ENCODE measurements at regions of chr15 and their contacts with region 1.

Region 1: GRCh38 chr15:28975766-28976179 is 90.0 kb downstream of the APBA2 start:
- DNase-seq: peak; percentile 32
- H3K4me3 ChIP-seq: no peak overlapping the region
- H3K27ac ChIP-seq: no peak overlapping the region
- H3K4me1 ChIP-seq: peaks cover 10% of the 10 kb centered on the region
- H3K27me3 ChIP-seq: peaks cover 0 to 1% of the 10 kb centered on the region in 2 experiments
- CTCF ChIP-seq: peak; percentile 75 to 87
- POLR2A ChIP-seq: no peak

Region 2: GRCh38 chr15:28786521-28786920 is 189.3 kb before region 1 on chr15:
- CTCF ChIA-PET with region 1: no interaction called
- POLR2A ChIA-PET with region 1: no interaction called
- dilution Hi-C with region 1: no loop called
- intact Hi-C with region 1: loop called (anchors 5 kb)
- DNase-seq: no peak
- H3K4me3 ChIP-seq: no peak overlapping the region
- H3K27ac ChIP-seq: no peak overlapping the region
- H3K4me1 ChIP-seq: no peaks in the 10 kb centered on the region
- H3K27me3 ChIP-seq: peaks cover 4 to 6% of the 10 kb centered on the region in 2 experiments
- CTCF ChIP-seq: no peak
- POLR2A ChIP-seq: no peak

Region 3: DNA sequence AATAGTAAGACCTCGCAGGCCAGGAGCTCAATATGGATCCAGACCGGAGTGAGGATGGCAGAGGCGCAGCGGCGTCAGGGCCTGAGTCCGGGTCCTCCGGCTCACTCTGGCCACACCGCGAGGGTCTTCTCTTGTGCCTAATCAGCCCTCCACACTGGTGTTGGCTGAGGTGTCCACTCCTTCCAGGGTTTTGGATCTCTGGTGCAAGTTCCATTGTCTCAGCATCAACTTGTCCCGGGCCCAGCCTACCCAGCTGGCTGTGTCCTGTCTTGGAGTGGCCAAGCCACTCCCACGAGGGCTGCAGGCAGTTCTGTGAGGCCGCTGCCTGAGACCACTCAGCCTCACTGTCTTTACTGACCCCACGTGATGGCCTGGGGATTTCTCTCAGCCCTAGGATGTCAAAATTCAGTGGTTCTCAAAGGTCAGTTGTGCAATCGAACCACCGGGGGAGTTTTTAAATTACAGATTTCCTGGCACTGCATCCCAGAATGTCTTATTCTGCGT is 114.7 kb before region 1 on chr15:
- CTCF ChIA-PET with region 1: no interaction called
- POLR2A ChIA-PET with region 1: no interaction called
- dilution Hi-C with region 1: no loop called
- intact Hi-C with region 1: no loop called
- DNase-seq: no peak
- H3K4me3 ChIP-seq: no peak overlapping the region
- H3K27ac ChIP-seq: no peak overlapping the region
- H3K4me1 ChIP-seq: no peaks in the 10 kb centered on the region
- H3K27me3 ChIP-seq: no peaks in the 10 kb centered on the region
- CTCF ChIP-seq: no peak
- POLR2A ChIP-seq: no peak

Region 4: DNA sequence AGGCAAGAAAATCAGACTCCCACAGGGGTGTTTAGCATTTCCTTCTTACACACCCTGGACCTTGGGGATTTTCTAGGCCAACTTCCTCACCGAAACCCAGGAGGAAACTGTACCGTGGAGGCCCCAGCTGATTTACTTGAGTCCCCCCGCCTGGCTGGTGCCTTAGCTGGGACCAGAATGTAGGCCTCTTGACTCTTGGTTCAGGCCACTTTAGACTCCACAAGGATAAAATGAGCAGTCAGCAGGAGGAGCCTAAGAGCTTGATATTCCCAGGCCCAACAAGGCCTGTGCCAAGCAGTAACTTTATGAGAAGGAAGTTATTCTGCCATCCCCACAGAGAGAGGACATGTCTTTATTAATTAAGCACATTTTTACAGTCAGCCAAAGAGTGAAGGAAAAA is 94.6 kb before region 1 on chr15:
- CTCF ChIA-PET with region 1: interaction called, 4 read pairs
- POLR2A ChIA-PET with region 1: no interaction called
- dilution Hi-C with region 1: no loop called
- intact Hi-C with region 1: loop called (anchors 5 kb)
- DNase-seq: no peak
- H3K4me3 ChIP-seq: no peak overlapping the region
- H3K27ac ChIP-seq: no peak overlapping the region
- H3K4me1 ChIP-seq: no peaks in the 10 kb centered on the region
- H3K27me3 ChIP-seq: peaks cover 0 to 2% of the 10 kb centered on the region in 2 experiments
- CTCF ChIP-seq: no peak
- POLR2A ChIP-seq: no peak

Region 5: GRCh38 chr15:28918121-28918910 is 57.5 kb before region 1 on chr15:
- CTCF ChIA-PET with region 1: interaction called, 3 read pairs
- POLR2A ChIA-PET with region 1: no interaction called
- dilution Hi-C with region 1: no loop called
- intact Hi-C with region 1: loop called (anchors 5 kb)
- DNase-seq: no peak
- H3K4me3 ChIP-seq: no peak overlapping the region
- H3K27ac ChIP-seq: no peak overlapping the region
- H3K4me1 ChIP-seq: no peaks in the 10 kb centered on the region
- H3K27me3 ChIP-seq: no peaks in the 10 kb centered on the region
- CTCF ChIP-seq: peak; percentile 15 to 45
- POLR2A ChIP-seq: no peak

Region 6: DNA sequence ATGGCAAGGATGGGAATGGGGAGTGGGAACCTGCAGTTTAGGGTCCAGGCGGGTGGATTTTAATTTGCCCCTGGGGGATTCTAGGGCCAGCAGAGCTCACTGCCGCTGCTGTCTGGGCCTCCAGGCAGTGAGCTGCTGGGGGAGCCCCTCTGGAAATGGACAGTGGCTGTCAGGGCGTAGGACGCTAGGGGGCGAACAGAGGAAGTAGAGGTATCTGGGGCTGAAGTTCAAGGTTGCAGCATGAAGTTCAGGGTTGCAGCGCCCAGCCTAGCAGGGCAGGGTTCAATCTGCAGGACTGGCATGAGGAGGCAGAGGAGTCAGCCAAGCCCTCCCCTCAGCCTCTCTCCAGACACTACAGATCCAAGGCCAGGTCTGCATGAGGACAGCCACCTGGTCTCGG is 40.4 kb before region 1 on chr15:
- CTCF ChIA-PET with region 1: interaction called, 3 read pairs
- POLR2A ChIA-PET with region 1: no interaction called
- dilution Hi-C with region 1: no loop called
- intact Hi-C with region 1: loop called (anchors 1 kb)
- DNase-seq: no peak
- H3K4me3 ChIP-seq: no peak overlapping the region
- H3K27ac ChIP-seq: no peak overlapping the region
- H3K4me1 ChIP-seq: no peaks in the 10 kb centered on the region
- H3K27me3 ChIP-seq: no peaks in the 10 kb centered on the region
- CTCF ChIP-seq: peak in 1 of 2 donors; percentile 18
- POLR2A ChIP-seq: no peak

Region 7: GRCh38 chr15:28960979-28961378 is 14.8 kb before region 1 on chr15:
- CTCF ChIA-PET with region 1: no interaction called
- POLR2A ChIA-PET with region 1: no interaction called
- dilution Hi-C with region 1: no loop called
- intact Hi-C with region 1: loop called (anchors 2 kb)
- DNase-seq: peak; percentile 20
- H3K4me3 ChIP-seq: no peak overlapping the region
- H3K27ac ChIP-seq: no peak overlapping the region
- H3K4me1 ChIP-seq: peaks cover 4% of the 10 kb centered on the region
- H3K27me3 ChIP-seq: no peaks in the 10 kb centered on the region
- CTCF ChIP-seq: no peak
- POLR2A ChIP-seq: no peak

Region 8: GRCh38 chr15:28989239-28989830 is 13.6 kb after region 1 on chr15:
- CTCF ChIA-PET with region 1: no interaction called
- POLR2A ChIA-PET with region 1: no interaction called
- dilution Hi-C with region 1: no loop called
- intact Hi-C with region 1: no loop called
- DNase-seq: no peak
- H3K4me3 ChIP-seq: no peak overlapping the region
- H3K27ac ChIP-seq: no peak overlapping the region
- H3K4me1 ChIP-seq: no peaks in the 10 kb centered on the region
- H3K27me3 ChIP-seq: no peaks in the 10 kb centered on the region
- CTCF ChIP-seq: peak in 1 of 2 donors; percentile 7
- POLR2A ChIP-seq: no peak

Region 9: GRCh38 chr15:29008846-29009245 is 33.1 kb after region 1 on chr15:
- CTCF ChIA-PET with region 1: no interaction called
- POLR2A ChIA-PET with region 1: no interaction called
- dilution Hi-C with region 1: no loop called
- intact Hi-C with region 1: no loop called
- DNase-seq: no peak
- H3K4me3 ChIP-seq: no peak overlapping the region
- H3K27ac ChIP-seq: no peak overlapping the region
- H3K4me1 ChIP-seq: no peaks in the 10 kb centered on the region
- H3K27me3 ChIP-seq: no peaks in the 10 kb centered on the region
- CTCF ChIP-seq: no peak
- POLR2A ChIP-seq: no peak

Region 10: DNA sequence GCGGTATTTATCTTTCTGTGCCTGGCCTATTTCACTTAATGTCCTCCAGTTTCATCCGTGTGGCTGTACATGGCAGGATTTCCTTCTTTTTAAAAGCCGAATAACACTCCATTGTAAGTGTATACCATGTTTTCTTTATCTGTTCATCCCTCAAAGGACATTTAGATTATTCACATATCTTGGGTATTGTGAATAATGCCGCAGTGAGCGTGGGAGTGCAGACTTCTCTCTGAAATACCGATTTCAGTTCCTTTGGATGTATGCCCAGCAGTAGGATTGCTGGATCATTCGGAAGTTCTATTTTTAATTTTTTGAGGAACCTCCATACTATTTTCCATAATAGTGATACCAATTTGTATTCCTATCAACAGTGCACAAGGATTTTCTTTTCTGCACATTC is 46.1 kb after region 1 on chr15:
- CTCF ChIA-PET with region 1: no interaction called
- POLR2A ChIA-PET with region 1: no interaction called
- dilution Hi-C with region 1: no loop called
- intact Hi-C with region 1: no loop called
- DNase-seq: no peak
- H3K4me3 ChIP-seq: no peak overlapping the region
- H3K27ac ChIP-seq: no peak overlapping the region
- H3K4me1 ChIP-seq: no peaks in the 10 kb centered on the region
- H3K27me3 ChIP-seq: no peaks in the 10 kb centered on the region
- CTCF ChIP-seq: no peak
- POLR2A ChIP-seq: no peak